GM13976 (cell line): ENCODE measurements at regions of chr18 and their contacts with region 1.

Region 1: DNA sequence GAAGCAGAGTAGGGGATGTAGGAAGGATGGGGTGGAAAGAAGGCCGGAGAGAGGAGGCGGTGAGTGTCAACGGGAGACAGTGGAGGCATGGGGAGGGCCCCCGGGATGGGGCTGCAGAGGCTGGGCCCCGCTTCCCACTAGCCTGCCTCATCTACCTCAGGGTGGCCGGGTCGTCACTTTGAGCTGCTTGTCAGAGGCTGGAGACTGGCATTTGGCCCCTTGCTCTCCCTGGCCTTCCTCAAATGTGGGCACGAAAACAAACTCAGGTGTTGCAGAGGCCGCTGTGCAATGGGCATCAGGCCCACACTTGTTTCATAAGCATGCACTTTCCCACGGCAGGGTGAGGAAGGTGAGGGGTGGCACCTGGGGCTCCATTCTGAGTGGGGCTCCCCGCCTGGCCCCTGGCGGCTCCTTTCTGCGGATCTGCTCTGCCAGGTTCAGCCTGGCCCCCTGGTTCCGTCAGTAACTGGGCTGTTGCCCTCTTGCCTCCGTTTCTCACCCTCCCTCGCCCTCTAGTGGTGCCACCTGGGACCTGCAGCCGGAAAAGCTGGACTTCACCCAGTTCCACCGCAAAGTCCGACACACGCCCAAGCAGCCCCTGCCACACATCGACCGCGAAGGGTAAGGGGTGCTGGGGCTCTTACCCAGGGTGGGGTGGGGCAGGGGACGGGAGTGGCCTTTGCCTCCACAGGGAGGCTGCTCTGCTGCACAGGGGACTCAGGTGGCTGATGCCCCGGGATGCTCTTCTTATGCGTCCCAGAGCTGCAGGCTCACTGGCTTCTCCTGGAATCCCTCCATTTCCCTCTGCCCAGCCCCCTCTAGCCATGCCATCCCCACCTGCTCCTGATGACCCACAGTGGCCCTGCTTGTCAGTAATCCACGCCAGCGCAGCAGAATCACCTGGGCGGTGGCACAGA is 125.4 kb downstream of the CTIF start:
- DNase-seq: peak; percentile 87
- CTCF ChIP-seq: peak; percentile 90

Region 2: GRCh38 chr18:48475635-48476549 is 188.3 kb before region 1 on chr18:
- in situ Hi-C with region 1: loop called (anchors 5 kb)
- DNase-seq: peak; percentile 65
- CTCF ChIP-seq: peak; percentile 80